ENCODE measurements at regions of chr7 and their contacts with region 1.

Region 1: DNA sequence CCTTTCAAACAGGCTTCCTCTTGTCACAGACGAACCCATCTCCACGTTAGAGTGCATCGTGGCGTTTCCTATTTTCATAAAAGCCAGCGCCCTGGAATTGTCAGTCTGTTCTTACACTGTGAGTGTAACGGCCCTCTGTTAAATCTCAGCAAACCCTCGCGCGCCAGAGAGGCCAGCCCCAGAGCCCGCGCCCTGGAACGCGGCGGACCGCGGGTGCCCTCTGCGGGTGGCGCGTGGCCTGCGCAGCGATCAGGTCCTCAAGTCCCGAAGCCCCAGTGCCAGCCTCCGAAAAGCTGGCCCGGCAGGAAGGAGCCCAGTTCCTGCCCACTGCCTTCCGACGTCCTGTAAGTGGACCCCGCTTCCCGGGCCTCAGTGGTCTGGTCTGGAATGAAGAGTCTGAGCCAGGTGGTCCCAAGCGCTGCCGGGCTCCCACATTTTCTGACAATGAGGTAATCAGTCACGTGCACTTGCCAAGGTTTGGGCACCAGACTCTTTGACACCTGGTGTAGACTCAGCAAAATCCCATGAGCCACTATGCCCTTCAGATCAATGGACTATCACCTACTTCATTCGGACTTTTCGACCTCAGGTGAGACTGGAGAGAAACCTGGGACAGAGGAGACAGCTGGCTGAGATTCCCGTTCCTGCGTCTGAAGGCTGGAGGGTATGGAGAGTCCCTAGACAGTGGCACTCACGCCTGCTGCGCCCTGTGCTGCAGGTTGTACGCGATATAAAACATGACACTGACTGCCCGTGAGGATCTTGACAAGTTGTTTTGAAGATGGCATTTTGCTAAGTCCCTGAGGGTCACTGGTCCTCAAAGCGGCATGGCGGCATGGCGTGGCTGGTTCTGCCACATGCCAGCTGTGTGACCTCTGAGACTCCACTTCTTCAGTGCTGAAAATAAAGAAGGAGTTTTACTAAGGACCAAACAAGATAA is 109.4 kb upstream of the LANCL2 start:
- DNase-seq: no peak
- H3K4me3 ChIP-seq: peak overlapping the region; percentile 52
- H3K27me3 ChIP-seq: no peaks in the 10 kb centered on the region
- CTCF ChIP-seq: peak; percentile 84

Region 2: DNA sequence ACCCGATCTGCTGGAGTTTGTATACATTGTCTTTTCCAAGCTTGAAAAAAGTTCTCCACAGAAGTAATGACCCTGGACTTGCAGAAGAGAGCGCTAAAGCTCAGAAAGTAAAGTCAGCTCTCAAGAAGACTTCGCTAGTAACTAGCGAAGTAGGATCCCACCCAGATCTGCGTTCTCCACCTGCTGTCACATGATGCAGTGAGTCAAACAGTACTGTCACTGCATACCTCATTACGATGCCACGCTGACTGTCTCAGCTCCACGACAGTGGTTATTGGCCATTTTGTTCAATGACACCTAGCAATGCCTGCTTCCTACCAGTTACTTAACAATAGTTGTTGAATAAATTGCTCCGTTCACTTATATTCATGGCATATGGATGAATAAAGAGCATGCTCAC is 467.1 kb before region 1 on chr7:
- CTCF ChIA-PET with region 1: interaction called, 398 read pairs
- POLR2A ChIA-PET with region 1: no interaction called
- DNase-seq: peak; percentile 51
- H3K4me3 ChIP-seq: no peak overlapping the region
- H3K27me3 ChIP-seq: no peaks in the 10 kb centered on the region
- CTCF ChIP-seq: peak; percentile 79

Region 3: GRCh38 chr7:54860003-54860775 is 395.6 kb before region 1 on chr7:
- CTCF ChIA-PET with region 1: interaction called, 15 read pairs
- POLR2A ChIA-PET with region 1: no interaction called
- DNase-seq: no peak
- H3K4me3 ChIP-seq: no peak overlapping the region
- H3K27me3 ChIP-seq: no peaks in the 10 kb centered on the region
- CTCF ChIP-seq: no peak

Region 4: DNA sequence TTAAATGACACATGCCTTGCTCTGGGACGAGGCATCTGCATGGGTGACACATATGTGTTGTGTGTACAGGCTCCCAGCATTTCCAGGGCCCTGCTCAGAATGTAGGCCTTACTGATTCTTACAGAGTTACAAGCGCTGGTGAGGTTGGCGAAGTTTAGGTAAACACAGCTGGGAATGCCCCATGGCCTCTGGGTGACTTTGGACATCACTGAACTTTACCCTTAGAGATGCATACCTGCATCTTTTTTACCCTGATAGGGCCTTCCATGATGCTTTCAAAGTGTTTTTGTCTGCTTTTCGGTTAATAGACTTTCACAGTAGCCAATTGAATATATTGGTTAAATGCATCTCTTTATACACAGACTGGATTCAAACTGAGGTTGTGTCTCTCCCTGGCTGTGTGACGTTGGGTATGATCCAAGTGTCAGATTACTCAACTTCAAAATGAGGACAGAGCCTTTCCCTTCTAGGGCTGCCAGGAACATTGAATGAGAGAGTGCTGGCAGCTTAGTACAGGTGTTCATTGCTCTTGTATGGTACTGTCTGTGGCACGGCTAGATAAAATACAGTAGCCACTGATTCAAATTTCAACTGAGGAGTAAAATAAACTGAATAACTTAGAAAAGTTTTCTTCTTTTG is 207.4 kb before region 1 on chr7:
- CTCF ChIA-PET with region 1: interaction called, 34 read pairs
- POLR2A ChIA-PET with region 1: no interaction called
- DNase-seq: no peak
- H3K4me3 ChIP-seq: no peak overlapping the region
- H3K27me3 ChIP-seq: no peaks in the 10 kb centered on the region
- CTCF ChIP-seq: no peak

Region 5: GRCh38 chr7:55132890-55133551 is 122.7 kb before region 1 on chr7:
- CTCF ChIA-PET with region 1: interaction called, 27 read pairs
- POLR2A ChIA-PET with region 1: no interaction called
- DNase-seq: peak; percentile 98
- H3K4me3 ChIP-seq: no peak overlapping the region
- H3K27me3 ChIP-seq: no peaks in the 10 kb centered on the region
- CTCF ChIP-seq: no peak

Region 6: DNA sequence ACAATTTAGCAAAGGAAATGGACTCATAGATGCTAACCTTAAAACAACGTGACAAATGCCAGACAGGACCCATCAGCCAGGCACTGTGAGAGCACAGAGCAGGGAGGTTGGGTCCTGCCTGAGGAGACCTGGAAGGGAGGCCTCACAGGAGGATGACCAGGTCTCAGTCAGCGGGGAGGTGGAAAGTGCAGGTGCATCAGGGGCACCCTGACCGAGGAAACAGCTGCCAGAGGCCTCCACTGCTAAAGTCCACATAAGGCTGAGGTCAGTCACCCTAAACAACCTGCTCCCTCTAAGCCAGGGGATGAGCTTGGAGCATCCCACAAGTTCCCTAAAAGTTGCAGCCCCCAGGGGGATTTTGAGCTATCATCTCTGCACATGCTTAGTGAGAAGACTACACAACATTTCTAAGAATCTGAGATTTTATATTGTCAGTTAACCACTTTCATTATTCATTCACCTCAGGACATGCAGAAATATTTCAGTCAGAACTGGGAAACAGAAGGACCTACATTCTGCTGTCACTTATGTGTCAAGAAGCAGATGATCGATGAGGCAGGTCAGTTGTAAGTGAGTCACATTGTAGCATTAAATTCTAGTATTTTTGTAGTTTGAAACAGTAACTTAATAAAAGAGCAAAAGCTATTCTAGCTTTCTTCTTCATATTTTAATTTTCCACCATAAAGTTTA is 48.2 kb before region 1 on chr7:
- CTCF ChIA-PET with region 1: interaction called, 11 read pairs
- POLR2A ChIA-PET with region 1: no interaction called
- DNase-seq: no peak
- H3K4me3 ChIP-seq: no peak overlapping the region
- H3K27me3 ChIP-seq: no peaks in the 10 kb centered on the region
- CTCF ChIP-seq: no peak

Region 7: GRCh38 chr7:55314962-55315685 is 59.4 kb after region 1 on chr7:
- CTCF ChIA-PET with region 1: no interaction called
- POLR2A ChIA-PET with region 1: no interaction called
- DNase-seq: no peak
- H3K4me3 ChIP-seq: no peak overlapping the region
- H3K27me3 ChIP-seq: peaks cover 2% of the 10 kb centered on the region; the same call in 1 of the 2 replicates
- CTCF ChIP-seq: no peak

Region 8: GRCh38 chr7:55365675-55366460 is 110.1 kb after region 1 on chr7:
- CTCF ChIA-PET with region 1: no interaction called
- POLR2A ChIA-PET with region 1: no interaction called
- DNase-seq: peak; percentile 57
- H3K4me3 ChIP-seq: peak overlapping the region; percentile 94
- H3K27me3 ChIP-seq: no peaks in the 10 kb centered on the region
- CTCF ChIP-seq: peak; percentile 4; the same call in 1 of the 2 replicates